CD4-positive, alpha-beta T cell (primary cell): ENCODE measurements at regions of chr15 and their contacts with region 1.

Region 1: GRCh38 chr15:93030430-93031105 is 58.4 kb downstream of the RGMA start:
- DNase-seq: peak; percentile 48 to 83 (median 58)
- ATAC-seq: peak; percentile 86
- H3K4me3 ChIP-seq: no peak overlapping the region
- H3K4me3 Mint-ChIP-seq: no peak overlapping the region
- H3K27ac ChIP-seq: no peak overlapping the region
- H3K27ac Mint-ChIP-seq: peak overlapping the region; percentile 80
- H3K4me1 ChIP-seq: peaks cover 28% of the 10 kb centered on the region
- H3K4me1 Mint-ChIP-seq: peaks cover 27% of the 10 kb centered on the region
- H3K27me3 ChIP-seq: no peaks in the 10 kb centered on the region
- H3K27me3 Mint-ChIP-seq: no peaks in the 10 kb centered on the region
- CTCF ChIP-seq: peak; percentile 78

Region 2: GRCh38 chr15:93007994-93008393 is 22.6 kb before region 1 on chr15:
- CTCF ChIA-PET with region 1: no interaction called
- POLR2A ChIA-PET with region 1: no interaction called
- intact Hi-C with region 1: no loop called
- DNase-seq: no peak
- ATAC-seq: no peak
- H3K4me3 ChIP-seq: no peak overlapping the region
- H3K4me3 Mint-ChIP-seq: no peak overlapping the region
- H3K27ac ChIP-seq: no peak overlapping the region
- H3K27ac Mint-ChIP-seq: no peak overlapping the region
- H3K4me1 ChIP-seq: no peaks in the 10 kb centered on the region
- H3K4me1 Mint-ChIP-seq: peaks cover 10% of the 10 kb centered on the region
- H3K27me3 ChIP-seq: no peaks in the 10 kb centered on the region
- H3K27me3 Mint-ChIP-seq: no peaks in the 10 kb centered on the region
- CTCF ChIP-seq: no peak

Region 3: GRCh38 chr15:93018580-93018979 is 12.0 kb before region 1 on chr15:
- CTCF ChIA-PET with region 1: interaction called, 13 read pairs
- POLR2A ChIA-PET with region 1: interaction called, 4 read pairs
- intact Hi-C with region 1: no loop called
- DNase-seq: no peak
- ATAC-seq: no peak
- H3K4me3 ChIP-seq: no peak overlapping the region
- H3K4me3 Mint-ChIP-seq: no peak overlapping the region
- H3K27ac ChIP-seq: no peak overlapping the region
- H3K27ac Mint-ChIP-seq: peak overlapping the region; percentile 64
- H3K4me1 ChIP-seq: peaks cover 3% of the 10 kb centered on the region
- H3K4me1 Mint-ChIP-seq: peaks cover 59% of the 10 kb centered on the region
- H3K27me3 ChIP-seq: no peaks in the 10 kb centered on the region
- H3K27me3 Mint-ChIP-seq: no peaks in the 10 kb centered on the region
- CTCF ChIP-seq: no peak

Region 4: GRCh38 chr15:93420050-93420452 is 389.5 kb after region 1 on chr15:
- CTCF ChIA-PET with region 1: no interaction called
- POLR2A ChIA-PET with region 1: no interaction called
- intact Hi-C with region 1: no loop called
- DNase-seq: peak in 1 of 14 experiments; percentile 1
- ATAC-seq: no peak
- H3K4me3 ChIP-seq: no peak overlapping the region
- H3K4me3 Mint-ChIP-seq: no peak overlapping the region
- H3K27ac ChIP-seq: no peak overlapping the region
- H3K27ac Mint-ChIP-seq: no peak overlapping the region
- H3K4me1 ChIP-seq: no peaks in the 10 kb centered on the region
- H3K4me1 Mint-ChIP-seq: no peaks in the 10 kb centered on the region
- H3K27me3 ChIP-seq: peaks cover 0 to 2% of the 10 kb centered on the region in 2 experiments
- H3K27me3 Mint-ChIP-seq: no peaks in the 10 kb centered on the region
- CTCF ChIP-seq: no peak

Region 5: GRCh38 chr15:94119923-94120775 is 1089.6 kb after region 1 on chr15:
- CTCF ChIA-PET with region 1: interaction called, 8 read pairs
- POLR2A ChIA-PET with region 1: interaction called, 7 read pairs
- intact Hi-C with region 1: loop called (anchors 1 to 2 kb)
- DNase-seq: peak in 11 of 14 experiments; percentile 1 to 82 (median 21)
- ATAC-seq: peak; percentile 96
- H3K4me3 ChIP-seq: no peak overlapping the region
- H3K4me3 Mint-ChIP-seq: no peak overlapping the region
- H3K27ac ChIP-seq: no peak overlapping the region
- H3K27ac Mint-ChIP-seq: no peak overlapping the region
- H3K4me1 ChIP-seq: no peaks in the 10 kb centered on the region
- H3K4me1 Mint-ChIP-seq: no peaks in the 10 kb centered on the region
- H3K27me3 ChIP-seq: no peaks in the 10 kb centered on the region
- H3K27me3 Mint-ChIP-seq: peaks cover 2% of the 10 kb centered on the region
- CTCF ChIP-seq: peak; percentile 42